ENCODE measurements at regions of chr9 and their contacts with region 1.

Region 1: DNA sequence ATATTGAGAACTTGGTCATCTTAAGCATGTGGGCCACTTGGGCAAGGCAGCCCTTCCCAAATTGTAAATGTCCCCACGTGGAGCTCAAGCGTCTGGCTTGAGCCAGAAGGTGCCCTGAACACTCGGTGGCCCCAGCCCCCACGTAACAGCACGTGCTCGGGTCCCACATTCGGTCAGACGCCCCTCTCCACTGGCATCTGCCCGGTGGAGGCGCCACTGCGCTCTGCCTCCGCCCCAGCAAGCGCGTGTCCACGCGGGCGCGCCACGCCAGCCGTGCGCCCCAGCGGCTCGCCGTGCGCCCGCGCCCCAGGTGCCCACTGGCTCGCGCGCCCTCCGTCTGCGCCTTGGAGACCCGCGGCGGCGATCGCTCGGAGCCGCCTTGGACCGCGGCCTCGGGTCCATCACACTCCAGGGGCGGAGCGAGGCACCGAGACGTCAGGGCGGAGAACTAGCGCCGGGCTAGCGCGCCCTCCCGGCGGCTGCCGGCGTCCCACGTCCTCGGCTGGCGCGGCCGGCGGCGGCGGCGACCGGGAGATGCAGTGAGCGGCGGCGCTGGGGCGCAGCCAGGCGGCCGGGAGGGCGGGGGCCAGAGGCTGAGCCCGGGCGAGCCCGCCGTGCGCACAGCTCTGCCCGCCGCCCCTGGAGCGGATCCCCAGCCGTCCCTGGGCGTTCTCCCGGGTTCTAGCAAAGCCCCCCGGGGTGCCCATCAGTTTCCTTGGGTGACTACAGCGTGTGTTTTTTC is at the start of gene PALM2AKAP2:
- DNase-seq: peak; percentile 90
- total RNA-seq, gene PALM2AKAP2: 65.6 to 101 TPM

Region 2: DNA sequence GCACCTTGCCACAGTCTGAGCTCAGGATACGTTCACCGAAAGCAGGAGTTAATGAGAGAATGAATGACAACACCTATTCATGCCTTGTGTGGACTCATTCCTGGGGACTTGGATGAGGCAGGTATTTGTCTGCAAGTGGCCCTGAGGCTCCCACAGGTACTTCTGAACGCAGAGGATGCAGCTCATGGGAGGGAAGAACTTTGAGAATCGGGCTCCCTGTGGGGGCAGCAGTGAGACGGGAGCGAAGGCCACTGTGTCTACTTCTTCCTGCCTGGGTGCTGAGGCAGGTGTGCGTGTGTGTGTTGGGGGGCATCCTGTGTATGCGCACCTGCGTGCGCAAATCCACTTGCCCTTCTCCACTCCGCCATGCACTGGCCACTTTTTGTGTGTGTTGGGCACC is 324.0 kb before region 1 on chr9:
- intact Hi-C with region 1: loop called in 1 of 2 experiments (anchors 2 kb)
- DNase-seq: no peak

Region 3: DNA sequence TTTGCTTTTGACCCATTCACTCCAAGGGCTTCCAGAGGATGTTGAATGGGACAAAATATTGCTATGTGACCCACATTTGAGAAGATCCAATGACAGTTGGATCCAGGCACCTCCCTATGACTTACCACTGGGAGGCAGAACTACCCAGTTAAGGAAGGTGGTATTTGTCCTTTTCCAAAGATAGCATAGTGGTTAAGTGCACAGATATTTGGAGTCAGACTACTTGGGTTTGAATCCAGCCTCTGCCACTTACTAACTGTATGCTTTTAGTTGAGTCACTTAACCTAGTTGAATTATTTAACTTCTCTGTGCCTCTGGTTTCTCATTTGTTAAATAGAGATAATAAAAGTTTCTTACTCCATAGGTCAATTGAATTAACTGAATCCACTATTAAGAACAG is 74.4 kb before region 1 on chr9:
- intact Hi-C with region 1: loop called in 1 of 2 experiments (anchors 10 kb)
- DNase-seq: no peak